ENCODE measurements at regions of chr1 and their contacts with region 1.

Region 1: GRCh38 chr1:20376880-20377494 is 86.3 kb downstream of the VWA5B1 start:
- DNase-seq: peak; percentile 52
- H3K4me3 ChIP-seq: no peak overlapping the region
- H3K27ac ChIP-seq: no peak overlapping the region
- H3K4me1 ChIP-seq: no peaks in the 10 kb centered on the region
- H3K27me3 ChIP-seq: no peaks in the 10 kb centered on the region
- CTCF ChIP-seq: peak; percentile 70

Region 2: DNA sequence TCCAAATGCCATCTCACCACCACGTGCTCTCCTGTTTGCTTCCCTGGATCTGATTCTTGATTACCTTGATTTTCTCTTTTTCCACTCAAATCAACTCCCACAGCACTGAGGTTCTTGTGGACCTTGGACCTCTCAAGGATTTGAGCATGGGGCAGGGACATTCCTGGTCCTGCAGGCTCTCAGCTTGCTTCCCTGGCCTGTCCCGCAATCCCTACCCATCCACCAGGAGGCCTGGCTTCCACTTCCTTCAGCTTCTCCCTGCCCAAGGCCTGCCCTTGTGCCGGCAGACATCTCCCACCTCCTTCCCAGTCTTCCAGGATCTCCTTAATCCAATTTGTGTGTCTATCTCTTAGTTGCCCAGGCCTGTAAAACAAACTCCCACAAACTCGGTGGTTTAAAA is 419.2 kb before region 1 on chr1:
- intact Hi-C with region 1: loop called (anchors 10 kb)
- DNase-seq: no peak
- H3K4me3 ChIP-seq: no peak overlapping the region
- H3K27ac ChIP-seq: no peak overlapping the region
- H3K4me1 ChIP-seq: no peaks in the 10 kb centered on the region
- H3K27me3 ChIP-seq: no peaks in the 10 kb centered on the region
- CTCF ChIP-seq: no peak

Measured in colonic mucosa (tissue), 4 donors.